GM10248 (cell line): ENCODE measurements at regions of chr10 and their contacts with region 1.

Region 1: GRCh38 chr10:67722113-67722512 is 26.1 kb upstream of the CTNNA3 start:
- DNase-seq: peak; percentile 31
- CTCF ChIP-seq: no peak

Region 2: DNA sequence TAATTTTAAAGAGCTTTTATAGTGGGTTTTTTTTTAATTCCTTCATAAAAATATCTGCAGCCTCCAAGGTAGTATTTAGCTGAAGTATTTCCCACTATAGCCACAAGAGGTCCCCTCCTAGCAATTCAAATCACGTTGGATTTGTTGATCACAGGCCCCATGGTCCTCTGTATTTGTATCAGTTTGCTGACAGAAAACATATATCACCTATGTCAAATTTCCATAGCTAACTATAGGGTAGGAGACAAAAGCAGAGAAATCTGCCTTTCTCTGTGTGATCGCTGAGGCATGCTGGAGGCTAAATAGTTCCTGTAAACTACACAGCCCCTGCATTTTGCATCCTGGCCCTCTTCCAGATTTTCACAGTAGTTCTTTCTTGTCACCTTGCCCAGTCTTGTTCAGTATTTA is 24.4 kb before region 1 on chr10:
- CTCF ChIA-PET with region 1: interaction called, 11 read pairs
- POLR2A ChIA-PET with region 1: no interaction called
- DNase-seq: peak; percentile 44
- CTCF ChIP-seq: peak; percentile 54

Region 3: GRCh38 chr10:67705921-67706320 is 16.2 kb before region 1 on chr10:
- CTCF ChIA-PET with region 1: interaction called, 11 read pairs
- POLR2A ChIA-PET with region 1: no interaction called
- DNase-seq: no peak
- CTCF ChIP-seq: no peak

Region 4: GRCh38 chr10:68560943-68561864 is 839.1 kb after region 1 on chr10:
- CTCF ChIA-PET with region 1: no interaction called
- POLR2A ChIA-PET with region 1: no interaction called
- DNase-seq: peak; percentile 29
- CTCF ChIP-seq: no peak